Activated CD4-positive, alpha-beta T cell treated with anti-CD3 and anti-CD28 coated beads for 36 hours (primary cell): ENCODE measurements at regions of chr1 and their contacts with region 1.

Region 1: DNA sequence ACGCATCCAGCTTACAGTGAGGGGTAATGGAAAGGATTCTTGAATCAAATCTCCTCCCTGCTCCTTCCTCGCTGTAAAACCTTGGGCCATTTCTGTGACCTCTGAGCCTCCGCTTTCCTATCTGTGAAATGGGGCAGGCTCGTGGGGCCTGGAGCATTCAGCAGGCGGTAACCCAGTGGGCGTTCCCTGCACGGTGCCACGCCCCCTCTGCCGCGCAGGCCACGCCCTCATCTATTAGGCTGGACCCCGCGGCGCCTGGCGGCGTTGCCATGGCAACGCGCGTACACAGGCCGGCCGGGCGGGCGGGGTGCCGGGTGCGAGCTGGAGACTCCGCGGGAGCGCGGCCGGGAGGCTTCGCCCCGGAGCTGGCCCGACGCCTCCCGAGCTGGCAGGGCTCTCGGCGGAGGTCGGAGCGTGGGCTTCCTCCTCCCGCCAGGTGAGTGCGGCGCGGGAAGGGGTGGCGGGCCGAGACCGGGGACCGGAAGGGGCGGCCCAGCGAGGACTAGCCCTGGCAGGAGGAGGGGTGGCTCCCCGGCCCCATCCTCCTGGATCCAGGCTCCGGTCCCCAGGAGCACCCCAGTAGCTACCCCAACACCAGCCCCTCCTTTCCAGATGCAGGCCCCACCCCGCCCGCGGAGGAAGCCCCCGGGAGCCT is at the start of gene FHAD1:
- DNase-seq: peak; percentile 63
- ATAC-seq: no peak
- H3K4me3 Mint-ChIP-seq: peak within 1 kb of the TSS; percentile 40
- H3K27ac Mint-ChIP-seq: peak within 1 kb of the TSS; percentile 10
- H3K4me1 Mint-ChIP-seq: peaks cover 72% of the 10 kb centered on the region
- H3K27me3 Mint-ChIP-seq: peaks cover 47% of the 10 kb centered on the region
- total RNA-seq, gene FHAD1: 0.21 to 0.53 TPM

Region 2: DNA sequence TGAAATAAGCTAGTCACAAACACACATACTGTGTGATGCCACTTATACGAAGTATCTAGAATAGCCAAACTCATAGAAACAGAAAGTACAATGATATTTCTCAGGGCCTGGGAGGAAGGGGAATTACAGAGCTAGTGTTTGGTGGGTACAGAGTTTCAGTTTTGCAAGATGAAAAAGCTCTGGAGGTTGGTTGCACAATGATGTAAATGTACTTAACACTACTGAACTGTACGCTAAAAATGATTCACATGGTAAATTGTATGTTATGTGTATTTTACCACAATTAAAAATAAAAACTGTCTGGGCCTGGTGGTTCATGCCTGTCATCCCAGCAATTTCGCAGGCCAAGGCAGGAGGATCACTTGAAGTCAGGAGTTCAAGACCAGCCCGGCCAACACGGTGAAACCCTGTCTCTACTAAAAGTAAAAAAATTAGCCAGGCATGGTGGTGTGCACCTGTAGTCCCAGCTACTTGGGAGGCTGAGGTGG is 15.3 kb before region 1 on chr1:
- CTCF ChIA-PET with region 1: interaction called, 13 read pairs
- POLR2A ChIA-PET with region 1: interaction called, 26 read pairs
- intact Hi-C with region 1: loop called (anchors 1 kb)
- DNase-seq: peak; percentile 42
- ATAC-seq: peak; percentile 99
- H3K4me3 Mint-ChIP-seq: no peak overlapping the region
- H3K27ac Mint-ChIP-seq: no peak overlapping the region
- H3K4me1 Mint-ChIP-seq: peaks cover 18% of the 10 kb centered on the region
- H3K27me3 Mint-ChIP-seq: peaks cover 18% of the 10 kb centered on the region

Region 3: GRCh38 chr1:15272009-15272788 is 25.1 kb after region 1 on chr1:
- CTCF ChIA-PET with region 1: no interaction called
- POLR2A ChIA-PET with region 1: no interaction called
- intact Hi-C with region 1: loop called in 1 of 2 experiments (anchors 1 kb)
- DNase-seq: peak; percentile 71
- ATAC-seq: peak; percentile 95
- H3K4me3 Mint-ChIP-seq: no peak overlapping the region
- H3K27ac Mint-ChIP-seq: no peak overlapping the region
- H3K4me1 Mint-ChIP-seq: peaks cover 5% of the 10 kb centered on the region
- H3K27me3 Mint-ChIP-seq: peaks cover 32% of the 10 kb centered on the region

Region 4: DNA sequence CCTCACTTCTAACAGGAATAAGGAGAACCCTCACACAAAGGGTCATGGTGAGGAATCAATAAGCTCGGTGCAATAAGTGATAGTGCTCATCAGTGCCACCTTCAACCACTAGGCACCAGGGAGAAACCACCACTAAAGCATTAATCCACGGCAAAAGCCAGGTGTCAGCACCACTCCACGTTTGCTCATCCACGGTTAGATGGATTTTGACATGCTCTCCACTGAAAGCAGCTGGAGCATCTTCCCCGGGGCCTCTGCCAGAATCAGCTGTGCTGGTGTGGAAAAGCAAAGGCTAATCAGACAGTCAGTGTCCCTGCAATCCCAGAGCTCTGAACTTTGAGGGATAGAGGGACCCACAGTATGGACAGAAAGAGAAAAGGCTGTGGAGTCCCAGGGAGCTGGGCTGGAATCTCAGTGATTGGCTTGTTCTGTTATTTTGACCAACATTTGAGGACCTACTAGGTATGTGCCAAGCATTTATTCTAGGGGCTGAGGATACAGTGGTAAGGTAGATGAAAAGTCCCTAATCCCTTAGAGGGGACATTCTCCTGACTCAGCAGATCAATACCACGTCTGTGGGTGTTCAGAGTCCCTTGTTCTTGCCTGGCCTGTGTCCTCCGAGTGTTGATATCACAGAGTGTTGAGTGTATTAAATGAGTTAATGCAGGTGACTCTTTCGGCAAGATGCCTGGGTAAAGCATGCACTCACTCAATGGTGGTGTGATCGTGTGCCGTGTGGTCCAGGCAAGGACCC is 41.3 kb after region 1 on chr1:
- CTCF ChIA-PET with region 1: interaction called, 3 read pairs
- POLR2A ChIA-PET with region 1: no interaction called
- intact Hi-C with region 1: loop called in 1 of 2 experiments (anchors 1 kb)
- DNase-seq: no peak
- ATAC-seq: no peak
- H3K4me3 Mint-ChIP-seq: no peak overlapping the region
- H3K27ac Mint-ChIP-seq: no peak overlapping the region
- H3K4me1 Mint-ChIP-seq: peaks cover 12% of the 10 kb centered on the region
- H3K27me3 Mint-ChIP-seq: peaks cover 14% of the 10 kb centered on the region

Region 5: GRCh38 chr1:15311880-15312279 is 64.8 kb after region 1 on chr1:
- CTCF ChIA-PET with region 1: no interaction called
- POLR2A ChIA-PET with region 1: no interaction called
- intact Hi-C with region 1: no loop called
- DNase-seq: peak; percentile 10
- ATAC-seq: peak; percentile 49
- H3K4me3 Mint-ChIP-seq: no peak overlapping the region
- H3K27ac Mint-ChIP-seq: no peak overlapping the region
- H3K4me1 Mint-ChIP-seq: no peaks in the 10 kb centered on the region
- H3K27me3 Mint-ChIP-seq: no peaks in the 10 kb centered on the region

Region 6: GRCh38 chr1:15352123-15352957 is 105.3 kb after region 1 on chr1:
- CTCF ChIA-PET with region 1: no interaction called
- POLR2A ChIA-PET with region 1: no interaction called
- intact Hi-C with region 1: loop called in 1 of 2 experiments (anchors 5 kb)
- DNase-seq: peak; percentile 71
- ATAC-seq: peak; percentile 90
- H3K4me3 Mint-ChIP-seq: no peak overlapping the region
- H3K27ac Mint-ChIP-seq: peak overlapping the region; percentile 61
- H3K4me1 Mint-ChIP-seq: peaks cover 39% of the 10 kb centered on the region
- H3K27me3 Mint-ChIP-seq: peaks cover 8% of the 10 kb centered on the region

Region 7: GRCh38 chr1:15409388-15410222 is 162.5 kb after region 1 on chr1 and contains the start of gene EFHD2:
- CTCF ChIA-PET with region 1: no interaction called
- POLR2A ChIA-PET with region 1: no interaction called
- intact Hi-C with region 1: loop called in 1 of 2 experiments (anchors 5 kb)
- DNase-seq: peak; percentile 90
- ATAC-seq: peak; percentile 86
- H3K4me3 Mint-ChIP-seq: peak within 1 kb of the TSS; percentile 87
- H3K27ac Mint-ChIP-seq: peak within 1 kb of the TSS; percentile 81
- H3K4me1 Mint-ChIP-seq: peaks cover 28% of the 10 kb centered on the region
- H3K27me3 Mint-ChIP-seq: peaks cover 5% of the 10 kb centered on the region
- total RNA-seq, gene EFHD2: 43.1 to 48.6 TPM

Region 8: DNA sequence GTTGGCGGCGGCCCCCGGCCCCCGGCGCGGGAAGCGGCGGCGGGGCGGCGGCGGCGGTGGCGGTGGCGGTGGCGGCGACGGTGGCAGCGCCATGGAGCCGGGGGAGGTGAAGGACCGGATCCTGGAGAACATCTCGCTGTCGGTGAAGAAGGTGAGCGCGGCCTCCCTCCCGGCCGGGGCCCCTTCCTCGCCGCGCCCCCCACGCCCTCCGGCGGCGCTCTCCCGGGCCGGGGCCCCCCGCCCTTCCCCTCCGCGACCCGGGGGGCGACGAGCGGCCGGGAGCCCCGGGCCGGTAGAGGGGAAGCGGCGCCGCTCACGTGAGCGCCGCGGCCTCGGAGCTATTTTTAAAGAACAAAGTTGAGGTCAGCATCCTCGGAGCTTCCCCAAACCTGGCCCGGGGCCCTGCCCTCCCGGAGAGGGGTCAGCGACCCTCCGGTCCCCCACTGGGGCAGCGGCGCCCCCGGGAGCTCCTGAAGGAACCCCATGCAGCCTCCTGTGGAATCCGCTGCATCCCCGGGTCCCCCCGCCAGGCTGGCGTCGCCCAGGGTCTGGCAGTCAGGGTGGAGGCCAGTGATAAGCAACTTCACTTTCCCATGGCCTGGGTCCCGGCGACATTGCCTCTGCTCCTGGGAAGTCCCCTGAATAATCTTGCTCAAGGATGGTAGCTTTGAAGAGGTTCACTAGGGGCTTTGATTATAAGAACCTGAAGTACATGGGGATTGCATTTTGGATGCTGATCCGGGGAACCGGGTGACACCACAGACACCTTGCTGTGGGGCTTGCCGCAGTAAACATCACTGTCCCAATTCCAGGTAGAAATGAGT is 437.6 kb after region 1 on chr1:
- CTCF ChIA-PET with region 1: no interaction called
- POLR2A ChIA-PET with region 1: no interaction called
- intact Hi-C with region 1: loop called in 1 of 2 experiments (anchors 5 kb)
- DNase-seq: peak; percentile 60
- ATAC-seq: peak; percentile 37
- H3K4me3 Mint-ChIP-seq: peak overlapping the region; percentile 86
- H3K27ac Mint-ChIP-seq: peak overlapping the region; percentile 92
- H3K4me1 Mint-ChIP-seq: peaks cover 53% of the 10 kb centered on the region
- H3K27me3 Mint-ChIP-seq: no peaks in the 10 kb centered on the region